ENCODE measurements at regions of chr19 and their contacts with region 1.

Region 1: GRCh38 chr19:40305403-40305802 is 20.3 kb upstream of the AKT2 start:
- DNase-seq: peak; percentile 66 to 73 (median 71)
- H3K4me3 ChIP-seq: no peak overlapping the region
- H3K4me3 Mint-ChIP-seq: no peak overlapping the region
- H3K27ac ChIP-seq: no peak overlapping the region
- H3K27ac Mint-ChIP-seq: no peak overlapping the region
- H3K4me1 ChIP-seq: no peaks in the 10 kb centered on the region
- H3K4me1 Mint-ChIP-seq: peaks cover 0 to 5% (median 2%) of the 10 kb centered on the region in 4 donors
- H3K27me3 ChIP-seq: no peaks in the 10 kb centered on the region
- H3K27me3 Mint-ChIP-seq: no peaks in the 10 kb centered on the region

Region 2: GRCh38 chr19:40294560-40294959 is 10.8 kb before region 1 on chr19:
- CTCF ChIA-PET with region 1: interaction called, 11 read pairs
- POLR2A ChIA-PET with region 1: no interaction called
- intact Hi-C with region 1: no loop called
- DNase-seq: no peak
- H3K4me3 ChIP-seq: no peak overlapping the region
- H3K4me3 Mint-ChIP-seq: no peak overlapping the region
- H3K27ac ChIP-seq: no peak overlapping the region
- H3K27ac Mint-ChIP-seq: peak overlapping the region in 1 of 7 donors; percentile 6
- H3K4me1 ChIP-seq: no peaks in the 10 kb centered on the region
- H3K4me1 Mint-ChIP-seq: no peaks in the 10 kb centered on the region
- H3K27me3 ChIP-seq: no peaks in the 10 kb centered on the region
- H3K27me3 Mint-ChIP-seq: no peaks in the 10 kb centered on the region

Region 3: GRCh38 chr19:40348125-40348913 is 42.9 kb after region 1 on chr19 and contains the starts of genes C19orf47 and PLD3:
- CTCF ChIA-PET with region 1: interaction called, 3 read pairs
- POLR2A ChIA-PET with region 1: interaction called, 4 read pairs
- intact Hi-C with region 1: loop called (anchors 1 kb)
- DNase-seq: peak; percentile 97 to 99 (median 99)
- H3K4me3 ChIP-seq: peak within 1 kb of the TSS; percentile 48 to 73
- H3K4me3 Mint-ChIP-seq: peak within 1 kb of the TSS; percentile 85 to 99 (median 94)
- H3K27ac ChIP-seq: peak within 1 kb of the TSS; percentile 84
- H3K27ac Mint-ChIP-seq: peak within 1 kb of the TSS; percentile 86 to 99 (median 95)
- H3K4me1 ChIP-seq: peaks cover 19% of the 10 kb centered on the region
- H3K4me1 Mint-ChIP-seq: peaks cover 27 to 44% (median 33%) of the 10 kb centered on the region in 4 donors
- H3K27me3 ChIP-seq: no peaks in the 10 kb centered on the region
- H3K27me3 Mint-ChIP-seq: no peaks in the 10 kb centered on the region
- total RNA-seq, gene C19orf47: 13.7 to 17.7 TPM
- total RNA-seq, gene PLD3: 116 to 117 TPM

Region 4: DNA sequence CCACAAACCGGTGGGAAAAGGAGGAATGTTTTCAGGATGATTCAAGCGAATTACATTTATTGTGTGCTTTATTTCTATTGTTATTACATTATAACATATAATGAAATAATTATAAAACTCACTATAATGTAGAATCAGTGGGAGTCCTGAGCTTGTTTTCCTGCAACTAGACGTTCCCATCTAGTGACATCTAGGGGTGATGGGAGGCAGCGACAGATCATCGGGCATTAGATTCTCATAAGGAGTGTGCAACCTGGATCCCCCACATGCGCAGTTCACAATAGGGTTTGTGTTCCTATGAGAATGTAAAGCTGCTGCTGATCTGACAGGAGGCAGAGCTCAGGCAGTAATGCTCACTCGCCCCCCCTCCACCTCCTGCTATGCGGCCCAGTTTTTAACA is 215.9 kb after region 1 on chr19:
- CTCF ChIA-PET with region 1: interaction called, 4 read pairs
- POLR2A ChIA-PET with region 1: no interaction called
- intact Hi-C with region 1: loop called (anchors 1 kb)
- DNase-seq: no peak
- H3K4me3 ChIP-seq: no peak overlapping the region
- H3K4me3 Mint-ChIP-seq: no peak overlapping the region
- H3K27ac ChIP-seq: no peak overlapping the region
- H3K27ac Mint-ChIP-seq: no peak overlapping the region
- H3K4me1 ChIP-seq: no peaks in the 10 kb centered on the region
- H3K4me1 Mint-ChIP-seq: peaks cover 1 to 6% (median 5%) of the 10 kb centered on the region in 4 donors
- H3K27me3 ChIP-seq: no peaks in the 10 kb centered on the region
- H3K27me3 Mint-ChIP-seq: peaks cover 14 to 31% of the 10 kb centered on the region in 2 donors

Region 5: DNA sequence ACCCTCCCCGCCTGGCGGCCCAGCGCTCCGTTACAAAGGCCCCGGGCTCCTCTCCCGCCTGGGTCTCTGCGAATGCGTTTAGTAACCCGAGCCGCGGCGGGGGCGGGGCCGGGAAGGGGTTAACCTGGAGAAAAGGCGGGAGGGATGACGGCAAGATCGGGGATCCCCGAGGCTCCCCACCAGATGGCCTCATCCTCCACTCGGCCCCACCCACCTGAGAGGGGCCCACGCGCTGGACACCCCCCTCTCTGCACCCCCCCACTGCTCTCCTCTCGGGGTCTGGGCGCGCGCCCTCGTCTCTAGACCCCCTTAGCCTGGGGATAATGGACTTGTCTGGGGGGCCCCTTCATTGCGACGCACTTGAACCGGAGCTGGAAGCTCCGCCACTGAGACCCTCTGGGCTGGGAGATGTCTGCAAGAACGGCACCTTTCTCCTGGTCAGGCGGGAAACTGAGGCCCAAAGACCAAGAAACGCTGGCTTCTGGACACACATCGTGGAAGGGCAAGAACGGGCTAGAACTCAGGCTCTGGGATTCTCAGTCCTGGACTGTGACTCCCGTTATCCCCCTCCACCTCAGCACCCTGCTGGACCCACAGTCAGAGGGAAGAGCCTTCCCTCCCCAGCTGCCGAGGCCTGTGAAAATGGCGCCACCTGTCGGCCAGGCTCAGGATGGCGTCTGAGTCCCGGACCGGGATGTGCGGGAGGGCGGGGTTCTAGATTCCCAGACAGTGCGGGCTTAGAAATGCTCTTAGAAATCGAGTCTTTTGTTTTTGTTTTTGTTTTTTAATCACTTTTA is 292.9 kb after region 1 on chr19:
- CTCF ChIA-PET with region 1: interaction called, 26 read pairs
- POLR2A ChIA-PET with region 1: no interaction called
- intact Hi-C with region 1: loop called (anchors 1 kb)
- DNase-seq: peak; percentile 76 to 83 (median 78)
- H3K4me3 ChIP-seq: no peak overlapping the region
- H3K4me3 Mint-ChIP-seq: peak overlapping the region in 4 of 8 donors; percentile 45 to 58 (median 55)
- H3K27ac ChIP-seq: no peak overlapping the region
- H3K27ac Mint-ChIP-seq: peak overlapping the region in 3 of 7 donors; percentile 28 to 68 (median 42)
- H3K4me1 ChIP-seq: peaks cover 64% of the 10 kb centered on the region
- H3K4me1 Mint-ChIP-seq: peaks cover 34 to 63% (median 47%) of the 10 kb centered on the region in 4 donors
- H3K27me3 ChIP-seq: peaks cover 26% of the 10 kb centered on the region
- H3K27me3 Mint-ChIP-seq: peaks cover 19 to 29% of the 10 kb centered on the region in 2 donors